Aorta (tissue), 5 donors: ENCODE measurements at regions of chr7 and their contacts with region 1.

Region 1: DNA sequence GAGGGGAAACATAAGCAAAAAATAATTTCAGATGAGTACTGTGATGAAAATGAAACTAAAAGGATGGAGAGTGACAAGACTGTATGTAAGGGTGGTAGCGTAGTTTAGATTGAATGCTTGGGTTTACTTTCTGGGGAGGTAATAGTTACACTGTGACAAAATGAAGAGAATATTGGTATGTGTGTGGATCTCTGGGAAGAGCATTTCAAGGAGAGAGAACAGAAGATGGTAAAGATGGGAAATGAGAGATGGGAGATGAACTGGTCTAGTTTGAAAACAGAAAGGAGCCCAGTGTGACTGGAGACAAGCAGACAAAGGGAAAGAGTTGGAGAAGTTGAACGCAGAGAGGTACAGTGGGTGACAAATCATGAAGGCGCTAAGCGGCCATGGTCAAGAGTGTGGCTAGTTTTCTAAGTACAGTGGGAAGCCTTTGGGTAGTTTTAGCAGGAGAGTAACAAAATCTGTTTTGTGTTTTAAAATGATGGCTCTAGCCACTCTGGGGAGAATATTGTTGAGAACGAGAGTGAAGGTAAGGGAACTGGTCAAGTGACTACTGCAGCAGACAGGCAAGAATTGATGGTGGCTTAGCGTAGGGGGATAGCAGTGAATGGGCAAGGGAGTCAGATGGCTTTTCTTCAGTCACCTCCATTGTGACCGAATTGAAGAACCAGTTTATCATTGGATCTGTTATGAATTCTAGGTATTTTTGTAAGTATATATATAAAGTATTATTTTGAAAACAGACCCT is 22.6 kb downstream of the PALS2 start:
- DNase-seq: no peak
- ATAC-seq: no peak
- H3K4me3 ChIP-seq: no peak overlapping the region
- H3K27ac ChIP-seq: no peak overlapping the region
- H3K4me1 ChIP-seq: no peaks in the 10 kb centered on the region
- H3K27me3 ChIP-seq: no peaks in the 10 kb centered on the region

Region 2: DNA sequence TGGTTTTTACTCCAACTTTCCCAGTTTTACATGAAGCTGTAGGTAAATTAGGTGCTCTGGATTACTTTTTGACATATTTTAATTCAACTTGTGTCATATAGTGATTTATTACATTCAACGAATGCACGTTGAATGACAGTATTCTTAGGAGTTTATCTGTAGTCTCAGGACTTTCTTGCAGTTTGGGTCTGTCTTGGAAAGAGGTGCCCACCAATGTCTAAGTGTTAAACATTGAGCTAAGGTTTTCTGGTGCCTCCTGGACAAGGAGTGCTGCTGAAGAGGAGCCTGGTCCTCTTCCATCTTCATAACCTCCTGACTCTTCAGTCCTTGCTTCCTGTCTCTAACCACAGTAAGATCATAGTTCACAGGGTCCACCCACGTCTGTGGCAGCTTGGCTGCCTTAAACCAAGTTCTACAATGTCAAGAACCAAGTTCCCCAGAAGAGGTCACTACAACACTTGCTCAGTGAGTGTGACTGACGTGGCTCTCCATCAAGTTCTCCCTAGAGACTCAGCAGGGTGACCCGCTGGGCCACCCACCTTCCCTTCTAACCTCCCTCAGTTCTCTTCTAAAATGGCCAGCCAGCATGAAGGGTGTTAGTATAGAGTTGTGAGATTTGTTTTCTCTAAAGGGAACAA is 305.7 kb before region 1 on chr7:
- intact Hi-C with region 1: loop called in 1 of 2 experiments (anchors 10 kb)
- DNase-seq: no peak
- ATAC-seq: no peak
- H3K4me3 ChIP-seq: no peak overlapping the region
- H3K27ac ChIP-seq: no peak overlapping the region
- H3K4me1 ChIP-seq: no peaks in the 10 kb centered on the region
- H3K27me3 ChIP-seq: no peaks in the 10 kb centered on the region

Region 3: DNA sequence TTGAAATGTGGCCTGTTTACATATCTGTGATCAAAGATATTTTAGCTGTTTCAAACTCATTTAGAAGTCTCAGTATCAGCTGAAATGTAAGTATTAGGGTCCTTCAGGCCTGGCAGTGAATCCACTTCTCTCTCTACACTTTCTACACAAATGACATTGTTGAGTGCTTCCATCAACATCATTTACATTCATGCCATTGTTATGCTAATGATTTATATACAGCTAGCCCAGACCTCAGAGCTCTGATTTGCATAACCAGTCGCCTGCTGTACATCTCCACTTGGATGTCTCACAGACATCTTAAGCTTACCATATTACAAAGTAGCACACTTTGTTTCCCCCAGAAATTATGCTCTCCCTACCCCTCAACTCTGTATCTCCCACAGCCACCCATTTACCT is 89.9 kb after region 1 on chr7:
- intact Hi-C with region 1: no loop called
- DNase-seq: no peak
- ATAC-seq: no peak
- H3K4me3 ChIP-seq: no peak overlapping the region
- H3K27ac ChIP-seq: no peak overlapping the region
- H3K4me1 ChIP-seq: no peaks in the 10 kb centered on the region
- H3K27me3 ChIP-seq: no peaks in the 10 kb centered on the region